ENCODE measurements at regions of chr3 and their contacts with region 1.

Region 1: GRCh38 chr3:196837819-196838420 is 29.8 kb upstream of the SENP5 start:
- DNase-seq: no peak
- H3K4me3 ChIP-seq: no peak overlapping the region
- H3K27ac ChIP-seq: no peak overlapping the region
- H3K4me1 ChIP-seq: no peaks in the 10 kb centered on the region
- H3K27me3 ChIP-seq: no peaks in the 10 kb centered on the region
- CTCF ChIP-seq: peak; percentile 25 to 54 (median 41)
- POLR2A ChIP-seq: no peak

Region 2: DNA sequence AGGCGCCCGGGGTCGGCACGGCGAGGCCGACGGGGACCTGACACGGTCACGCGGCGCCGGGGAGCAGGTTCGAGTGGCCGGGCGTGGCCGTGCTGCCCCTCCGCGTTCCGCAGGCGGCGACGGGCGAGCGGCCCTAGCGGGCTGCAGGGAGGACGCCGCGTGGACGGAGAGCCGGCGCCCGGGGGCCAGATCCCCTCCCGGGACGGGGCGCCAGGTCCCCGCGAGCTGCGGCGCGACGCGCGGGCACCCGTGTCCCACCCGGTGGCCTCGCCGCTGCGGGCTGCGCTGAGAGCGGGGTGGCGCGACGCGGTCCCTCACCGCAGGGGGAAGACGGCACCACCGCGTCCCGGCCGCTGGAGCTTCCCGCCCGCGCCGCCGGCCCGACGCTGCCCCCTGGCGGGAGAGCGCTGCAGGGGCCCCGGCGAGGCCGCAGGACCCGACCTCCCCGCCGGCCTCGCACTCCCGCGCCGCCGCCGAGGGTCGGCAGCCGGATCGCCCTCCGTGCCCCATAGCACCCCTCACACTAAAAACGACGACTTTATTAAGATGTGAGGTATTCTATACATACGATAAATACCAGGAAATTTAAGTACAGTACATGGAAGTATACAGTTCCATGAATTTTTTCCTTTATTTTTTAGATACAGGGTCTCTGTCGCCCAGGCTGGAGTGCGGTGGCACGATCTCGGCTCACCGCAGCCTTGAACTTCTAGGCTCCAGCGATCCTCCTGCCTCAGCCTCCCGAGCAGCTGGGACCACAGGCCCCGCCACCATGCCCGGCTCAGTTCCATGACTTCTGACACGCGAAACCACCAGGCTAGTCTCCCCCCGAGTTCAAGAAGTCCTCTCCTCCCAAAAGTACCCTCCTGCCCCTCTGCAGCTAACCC is 132.0 kb after region 1 on chr3:
- intact Hi-C with region 1: loop called (anchors 10 kb)
- DNase-seq: no peak
- H3K4me3 ChIP-seq: peak overlapping the region; percentile 90 to 98
- H3K27ac ChIP-seq: peak overlapping the region; percentile 78
- H3K4me1 ChIP-seq: peaks cover 17% of the 10 kb centered on the region
- H3K27me3 ChIP-seq: no peaks in the 10 kb centered on the region
- CTCF ChIP-seq: peak; percentile 27 to 90 (median 56)
- POLR2A ChIP-seq: no peak